ENCODE measurements at regions of chr10 and their contacts with region 1.

Region 1: GRCh38 chr10:70925377-70926225 is 37.2 kb upstream of the PCBD1 start:
- DNase-seq: peak; percentile 64
- H3K4me3 Mint-ChIP-seq: no peak overlapping the region
- H3K27ac Mint-ChIP-seq: no peak overlapping the region
- H3K4me1 Mint-ChIP-seq: peaks cover 4% of the 10 kb centered on the region
- H3K27me3 Mint-ChIP-seq: peaks cover 15% of the 10 kb centered on the region

Region 2: GRCh38 chr10:70943841-70944466 is 18.4 kb after region 1 on chr10:
- CTCF ChIA-PET with region 1: interaction called, 12 read pairs
- DNase-seq: no peak
- H3K4me3 Mint-ChIP-seq: no peak overlapping the region
- H3K27ac Mint-ChIP-seq: no peak overlapping the region
- H3K4me1 Mint-ChIP-seq: no peaks in the 10 kb centered on the region
- H3K27me3 Mint-ChIP-seq: peaks cover 20% of the 10 kb centered on the region

Region 3: DNA sequence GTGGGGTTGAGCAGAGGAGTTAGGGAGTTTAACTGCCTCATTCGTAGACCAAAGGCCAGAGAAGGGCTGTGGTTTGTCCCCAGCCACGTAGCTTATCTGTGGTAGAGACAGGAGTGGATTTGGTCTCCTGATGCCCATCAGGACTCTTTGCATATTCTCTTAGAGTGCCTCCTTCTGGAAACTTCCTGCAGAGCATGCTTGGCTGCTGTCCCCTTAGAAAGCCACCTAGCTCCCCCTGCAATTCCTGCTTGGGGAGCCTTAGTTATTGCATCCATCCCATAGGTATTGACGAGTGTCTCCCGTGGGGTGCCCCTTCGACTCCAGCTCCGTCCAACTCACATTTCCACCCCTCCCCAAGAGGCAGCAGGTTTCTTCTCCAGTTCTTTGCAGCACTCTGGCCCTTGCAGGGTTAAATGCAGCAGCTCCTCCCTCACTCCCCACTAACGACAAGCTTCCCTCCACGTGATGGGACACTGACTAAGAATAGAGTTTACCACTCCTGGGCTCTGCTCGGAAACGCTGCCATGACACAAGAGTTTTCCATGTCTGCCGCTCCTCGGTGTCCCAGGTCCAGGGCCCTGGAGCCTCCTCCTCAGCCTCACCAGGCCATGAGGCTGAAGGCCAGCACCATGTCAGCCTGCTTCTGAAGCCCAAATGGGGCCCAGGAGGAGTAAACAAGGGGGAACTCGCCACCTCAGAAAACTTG is 139.0 kb after region 1 on chr10:
- CTCF ChIA-PET with region 1: interaction called, 11 read pairs
- DNase-seq: no peak
- H3K4me3 Mint-ChIP-seq: no peak overlapping the region
- H3K27ac Mint-ChIP-seq: no peak overlapping the region
- H3K4me1 Mint-ChIP-seq: no peaks in the 10 kb centered on the region
- H3K27me3 Mint-ChIP-seq: no peaks in the 10 kb centered on the region

Region 4: GRCh38 chr10:71209352-71209715 is 283.7 kb after region 1 on chr10:
- CTCF ChIA-PET with region 1: interaction called, 20 read pairs
- DNase-seq: no peak
- H3K4me3 Mint-ChIP-seq: no peak overlapping the region
- H3K27ac Mint-ChIP-seq: no peak overlapping the region
- H3K4me1 Mint-ChIP-seq: peaks cover 8% of the 10 kb centered on the region
- H3K27me3 Mint-ChIP-seq: peaks cover 86% of the 10 kb centered on the region

Region 5: GRCh38 chr10:71217266-71218045 is 291.9 kb after region 1 on chr10:
- CTCF ChIA-PET with region 1: interaction called, 12 read pairs
- DNase-seq: no peak
- H3K4me3 Mint-ChIP-seq: peak overlapping the region; percentile 26
- H3K27ac Mint-ChIP-seq: no peak overlapping the region
- H3K4me1 Mint-ChIP-seq: peaks cover 10% of the 10 kb centered on the region
- H3K27me3 Mint-ChIP-seq: peaks cover 98% of the 10 kb centered on the region

Region 6: DNA sequence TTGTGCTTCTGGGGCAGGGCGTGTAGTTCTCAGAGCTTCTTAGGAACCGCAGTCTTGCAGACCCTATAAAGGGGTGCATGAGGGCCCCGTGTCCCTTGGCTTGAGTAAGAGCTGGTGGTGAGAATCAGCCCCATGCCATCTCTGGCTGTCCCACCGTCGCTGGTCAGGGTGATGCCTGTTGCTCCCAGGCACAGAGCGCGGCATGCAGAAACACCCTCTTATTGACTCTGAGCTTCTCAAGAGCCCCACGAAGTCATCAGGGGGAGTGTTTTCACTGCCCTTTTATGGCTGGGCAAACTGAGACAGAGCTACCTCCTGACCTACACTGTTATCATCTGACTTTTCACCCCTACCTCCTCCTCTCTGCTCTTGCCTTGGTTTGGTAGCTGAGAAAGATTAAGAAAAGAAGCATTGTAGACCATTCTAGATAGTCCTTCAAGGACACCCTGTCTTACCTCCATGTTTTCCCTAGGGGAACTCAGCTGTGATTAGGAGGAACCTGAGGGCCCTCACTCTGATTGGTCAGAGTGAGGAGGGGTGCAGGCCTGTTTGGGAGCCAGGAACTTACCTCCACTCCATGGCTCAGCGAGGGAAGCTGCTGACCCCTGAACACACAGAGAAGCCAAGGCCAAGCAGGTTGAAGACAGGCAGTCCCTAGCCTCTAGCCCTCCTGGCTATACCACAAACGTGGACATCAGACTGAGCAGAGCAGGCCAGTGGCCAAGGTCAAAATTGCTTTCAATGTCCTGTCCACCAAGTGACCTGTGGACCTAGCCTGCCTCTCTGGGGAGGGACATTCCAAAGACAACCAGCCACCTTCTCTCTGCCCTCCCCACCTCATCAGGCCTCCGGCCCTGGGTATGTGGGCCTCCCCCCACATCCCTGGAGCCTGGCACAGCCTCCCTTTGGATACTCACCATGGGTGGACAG is 304.4 kb after region 1 on chr10:
- CTCF ChIA-PET with region 1: no interaction called
- DNase-seq: no peak
- H3K4me3 Mint-ChIP-seq: no peak overlapping the region
- H3K27ac Mint-ChIP-seq: no peak overlapping the region
- H3K4me1 Mint-ChIP-seq: no peaks in the 10 kb centered on the region
- H3K27me3 Mint-ChIP-seq: peaks cover 13% of the 10 kb centered on the region

Region 7: GRCh38 chr10:71285180-71285545 is 359.6 kb after region 1 on chr10:
- CTCF ChIA-PET with region 1: interaction called, 22 read pairs
- DNase-seq: peak; percentile 45
- H3K4me3 Mint-ChIP-seq: no peak overlapping the region
- H3K27ac Mint-ChIP-seq: no peak overlapping the region
- H3K4me1 Mint-ChIP-seq: no peaks in the 10 kb centered on the region
- H3K27me3 Mint-ChIP-seq: no peaks in the 10 kb centered on the region